ENCODE measurements at regions of chr10 and their contacts with region 1.

Region 1: GRCh38 chr10:13707156-13707881 is 120.6 kb downstream of the PRPF18 start:
- H3K4me3 Mint-ChIP-seq: peak overlapping the region; percentile 89
- H3K27ac Mint-ChIP-seq: peak overlapping the region; percentile 75
- H3K4me1 Mint-ChIP-seq: peaks cover 87% of the 10 kb centered on the region
- H3K27me3 Mint-ChIP-seq: peaks cover 2% of the 10 kb centered on the region

Region 2: DNA sequence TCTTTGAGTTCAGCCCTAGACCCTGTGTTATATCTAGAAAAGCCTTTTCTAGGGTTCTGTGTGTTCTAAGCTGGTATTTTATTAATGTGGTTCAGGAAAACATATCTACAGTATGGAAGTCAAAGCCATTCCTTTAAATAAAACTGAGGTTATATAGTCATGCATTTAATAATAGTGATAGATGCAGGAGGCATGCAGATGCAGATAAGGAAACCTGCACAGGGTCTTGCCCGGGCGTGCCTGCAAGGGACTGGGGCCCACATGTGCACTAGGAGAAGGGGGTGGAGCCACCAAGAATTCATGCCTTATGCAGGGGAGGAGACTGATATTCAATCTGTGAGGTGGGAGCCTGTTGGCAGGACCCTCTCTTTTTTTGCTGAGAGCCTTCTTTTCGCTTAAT is 51.0 kb after region 1 on chr10:
- intact Hi-C with region 1: loop called (anchors 5 kb)
- H3K4me3 Mint-ChIP-seq: no peak overlapping the region
- H3K27ac Mint-ChIP-seq: peak overlapping the region; percentile 74
- H3K4me1 Mint-ChIP-seq: peaks cover 10% of the 10 kb centered on the region
- H3K27me3 Mint-ChIP-seq: no peaks in the 10 kb centered on the region